ENCODE measurements at regions of chr7 and their contacts with region 1.

Region 1: DNA sequence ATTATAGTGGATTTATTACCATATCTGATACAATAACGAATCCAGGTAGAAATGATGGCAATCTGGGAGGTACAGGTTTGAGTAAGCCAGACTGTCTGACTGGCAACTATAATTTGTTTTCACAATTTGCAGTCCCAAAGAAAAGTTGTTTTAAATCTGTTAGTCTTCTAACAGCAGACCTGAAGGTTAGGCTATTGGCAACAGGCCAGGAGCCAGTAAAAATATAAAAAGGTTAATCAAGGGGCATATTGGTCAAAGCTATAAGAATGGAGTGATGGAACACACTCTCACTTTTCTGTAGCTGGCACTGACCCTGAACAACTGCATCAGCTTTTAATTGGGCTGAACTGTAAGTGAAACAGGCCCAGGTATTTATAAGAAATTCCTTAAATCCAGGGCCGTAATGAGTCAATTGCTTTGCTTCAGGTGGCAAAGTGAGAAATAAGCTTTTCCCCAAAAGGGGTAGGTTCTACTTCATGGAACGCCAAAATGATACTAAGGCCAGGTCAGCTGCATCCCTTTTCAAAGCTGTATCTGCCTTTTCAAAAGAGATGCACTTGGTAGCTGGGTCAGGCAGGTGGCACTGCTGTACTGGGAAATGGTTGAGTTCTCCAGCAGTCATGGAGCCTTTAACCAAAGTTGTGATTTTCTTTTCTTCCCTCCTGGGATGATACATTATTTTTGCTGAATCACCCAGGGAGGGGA is 7.0 kb upstream of the GPR22 start:
- DNase-seq: peak; percentile 12
- CTCF ChIP-seq: peak; percentile 74

Region 2: DNA sequence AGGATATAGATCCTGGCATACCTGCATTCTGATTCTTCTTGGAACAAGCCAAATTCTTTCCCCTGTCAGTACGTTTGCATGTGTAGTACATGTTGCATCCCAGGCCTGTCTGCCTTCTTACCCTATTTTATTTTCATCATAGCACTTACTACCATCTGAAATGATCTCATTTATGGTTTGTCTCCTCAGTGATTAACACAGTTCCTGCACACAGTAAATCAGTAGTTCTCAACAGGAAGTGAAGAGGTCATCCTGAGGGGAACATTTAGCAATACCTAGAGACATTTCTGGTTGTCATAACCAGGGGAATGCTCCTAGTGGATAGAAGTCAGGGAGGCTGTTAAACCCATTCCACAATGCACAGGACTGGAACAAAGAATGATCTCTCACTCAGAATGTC is 159.5 kb after region 1 on chr7:
- in situ Hi-C with region 1: no loop called
- DNase-seq: no peak
- CTCF ChIP-seq: no peak

Region 3: DNA sequence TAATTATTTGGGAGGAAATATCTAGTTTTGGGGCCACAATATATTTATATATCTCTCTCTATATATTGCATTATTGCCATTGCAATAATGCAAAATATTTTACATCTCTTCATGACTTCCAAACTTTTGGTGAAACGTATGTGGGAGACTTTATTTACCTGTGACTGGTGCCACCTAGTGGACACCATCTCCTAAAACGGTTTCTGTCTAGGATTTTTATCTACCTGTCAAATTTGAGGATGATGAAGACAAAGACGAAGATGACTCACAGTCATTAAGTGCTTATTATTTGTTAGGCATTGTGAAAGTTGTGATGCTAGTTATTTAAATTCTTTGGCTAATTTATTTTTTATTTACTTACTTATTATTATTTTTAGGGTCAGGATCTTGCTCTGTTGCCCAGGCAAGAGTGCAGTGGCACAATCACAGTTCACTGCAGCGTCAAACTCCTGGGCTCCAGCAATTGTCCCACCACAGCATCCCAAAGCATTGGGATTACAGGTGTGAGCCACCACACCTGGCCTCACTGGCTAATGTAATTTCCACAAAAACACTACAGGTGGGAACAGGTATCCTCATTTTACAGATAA is 262.4 kb after region 1 on chr7:
- in situ Hi-C with region 1: loop called (anchors 10 kb)
- DNase-seq: peak; percentile 74
- CTCF ChIP-seq: peak; percentile 64

Measured in GM13977 (cell line).